ENCODE measurements at regions of chr1 and their contacts with region 1.

Region 1: GRCh38 chr1:242613266-242613815 is 88.8 kb upstream of the PLD5 start:
- DNase-seq: no peak
- ATAC-seq: no peak
- H3K4me3 ChIP-seq: no peak overlapping the region
- H3K4me3 Mint-ChIP-seq: no peak overlapping the region
- H3K27ac ChIP-seq: no peak overlapping the region
- H3K27ac Mint-ChIP-seq: no peak overlapping the region
- H3K4me1 ChIP-seq: no peaks in the 10 kb centered on the region
- H3K4me1 Mint-ChIP-seq: no peaks in the 10 kb centered on the region
- H3K27me3 ChIP-seq: no peaks in the 10 kb centered on the region
- H3K27me3 Mint-ChIP-seq: no peaks in the 10 kb centered on the region
- CTCF ChIP-seq: no peak

Region 2: GRCh38 chr1:241883159-241883558 is 730.2 kb before region 1 on chr1:
- intact Hi-C with region 1: no loop called
- DNase-seq: no peak
- ATAC-seq: no peak
- H3K4me3 ChIP-seq: no peak overlapping the region
- H3K4me3 Mint-ChIP-seq: no peak overlapping the region
- H3K27ac ChIP-seq: no peak overlapping the region
- H3K27ac Mint-ChIP-seq: no peak overlapping the region
- H3K4me1 ChIP-seq: no peaks in the 10 kb centered on the region
- H3K4me1 Mint-ChIP-seq: no peaks in the 10 kb centered on the region
- H3K27me3 ChIP-seq: no peaks in the 10 kb centered on the region
- H3K27me3 Mint-ChIP-seq: no peaks in the 10 kb centered on the region
- CTCF ChIP-seq: no peak

Region 3: DNA sequence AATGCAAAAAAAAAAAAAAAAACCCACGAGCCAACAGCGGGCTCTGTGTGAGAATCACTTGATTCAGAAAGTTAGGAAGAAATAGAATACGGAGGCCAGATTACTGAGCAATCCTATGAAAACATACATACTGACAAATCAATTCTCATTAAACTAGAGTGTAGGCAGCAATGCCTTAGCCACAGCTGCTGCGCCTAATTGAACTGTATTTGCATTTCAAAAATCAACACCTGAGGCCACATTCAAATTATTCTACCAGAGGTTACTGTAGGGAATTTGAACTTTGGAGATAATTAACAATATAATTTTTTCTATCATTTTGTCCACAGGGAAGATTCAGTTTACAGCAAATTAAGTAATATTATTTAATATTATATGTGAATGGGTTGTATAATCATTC is 49.5 kb after region 1 on chr1:
- intact Hi-C with region 1: loop called (anchors 5 kb)
- DNase-seq: no peak
- ATAC-seq: no peak
- H3K4me3 ChIP-seq: no peak overlapping the region
- H3K4me3 Mint-ChIP-seq: no peak overlapping the region
- H3K27ac ChIP-seq: no peak overlapping the region
- H3K27ac Mint-ChIP-seq: no peak overlapping the region
- H3K4me1 ChIP-seq: no peaks in the 10 kb centered on the region
- H3K4me1 Mint-ChIP-seq: no peaks in the 10 kb centered on the region
- H3K27me3 ChIP-seq: no peaks in the 10 kb centered on the region
- H3K27me3 Mint-ChIP-seq: no peaks in the 10 kb centered on the region
- CTCF ChIP-seq: no peak

Region 4: GRCh38 chr1:242890192-242890741 is 276.9 kb after region 1 on chr1:
- intact Hi-C with region 1: no loop called
- DNase-seq: no peak
- ATAC-seq: no peak
- H3K4me3 ChIP-seq: no peak overlapping the region
- H3K4me3 Mint-ChIP-seq: no peak overlapping the region
- H3K27ac ChIP-seq: no peak overlapping the region
- H3K27ac Mint-ChIP-seq: no peak overlapping the region
- H3K4me1 ChIP-seq: no peaks in the 10 kb centered on the region
- H3K4me1 Mint-ChIP-seq: no peaks in the 10 kb centered on the region
- H3K27me3 ChIP-seq: no peaks in the 10 kb centered on the region
- H3K27me3 Mint-ChIP-seq: no peaks in the 10 kb centered on the region
- CTCF ChIP-seq: no peak

Measured in natural killer cell (primary cell).